Activated naive CD4-positive, alpha-beta T cell treated with anti-CD3 and anti-CD28 coated beads for 36 hours (primary cell): ENCODE measurements at regions of chr7 and their contacts with region 1.

Region 1: DNA sequence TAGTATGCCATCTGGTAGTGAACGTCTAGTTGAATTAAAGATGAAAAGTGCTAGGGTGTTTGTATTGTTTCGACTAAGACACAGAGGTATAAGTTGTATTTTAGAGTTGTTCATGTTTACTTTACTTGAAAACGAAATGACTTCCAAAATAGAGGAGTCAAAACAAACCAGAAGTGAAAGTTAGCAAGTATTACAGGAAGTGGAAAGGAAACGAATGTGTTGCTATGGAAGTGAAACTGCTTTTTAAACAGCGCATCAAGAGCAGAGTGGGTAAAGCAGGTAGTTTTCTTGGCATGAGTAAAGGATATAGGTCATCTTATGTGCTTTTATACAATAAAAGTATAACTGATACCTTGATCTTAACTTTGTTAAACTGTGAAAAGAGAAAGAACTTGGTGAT is 20.0 kb upstream of the GALNTL5 start:
- DNase-seq: no peak
- H3K4me3 Mint-ChIP-seq: peak overlapping the region; percentile 45
- H3K27ac Mint-ChIP-seq: peak overlapping the region; percentile 73
- H3K4me1 Mint-ChIP-seq: peaks cover 30% of the 10 kb centered on the region
- H3K27me3 Mint-ChIP-seq: no peaks in the 10 kb centered on the region

Region 2: GRCh38 chr7:151570366-151570915 is 365.8 kb before region 1 on chr7:
- CTCF ChIA-PET with region 1: no interaction called
- intact Hi-C with region 1: loop called (anchors 10 kb)
- DNase-seq: no peak
- H3K4me3 Mint-ChIP-seq: no peak overlapping the region
- H3K27ac Mint-ChIP-seq: no peak overlapping the region
- H3K4me1 Mint-ChIP-seq: no peaks in the 10 kb centered on the region
- H3K27me3 Mint-ChIP-seq: no peaks in the 10 kb centered on the region

Region 3: GRCh38 chr7:151769188-151769841 is 166.9 kb before region 1 on chr7:
- CTCF ChIA-PET with region 1: no interaction called
- intact Hi-C with region 1: loop called (anchors 1 kb)
- DNase-seq: peak; percentile 62
- H3K4me3 Mint-ChIP-seq: peak overlapping the region; percentile 10
- H3K27ac Mint-ChIP-seq: peak overlapping the region; percentile 86
- H3K4me1 Mint-ChIP-seq: peaks cover 51% of the 10 kb centered on the region
- H3K27me3 Mint-ChIP-seq: no peaks in the 10 kb centered on the region

Region 4: GRCh38 chr7:151863386-151864079 is 72.7 kb before region 1 on chr7:
- CTCF ChIA-PET with region 1: no interaction called
- intact Hi-C with region 1: loop called (anchors 1 kb)
- DNase-seq: peak; percentile 24
- H3K4me3 Mint-ChIP-seq: no peak overlapping the region
- H3K27ac Mint-ChIP-seq: no peak overlapping the region
- H3K4me1 Mint-ChIP-seq: peaks cover 6% of the 10 kb centered on the region
- H3K27me3 Mint-ChIP-seq: no peaks in the 10 kb centered on the region

Region 5: GRCh38 chr7:151925446-151926335 is 10.5 kb before region 1 on chr7:
- CTCF ChIA-PET with region 1: interaction called, 3 read pairs
- intact Hi-C with region 1: loop called (anchors 1 kb)
- DNase-seq: peak; percentile 60
- H3K4me3 Mint-ChIP-seq: no peak overlapping the region
- H3K27ac Mint-ChIP-seq: peak overlapping the region; percentile 51
- H3K4me1 Mint-ChIP-seq: peaks cover 10% of the 10 kb centered on the region
- H3K27me3 Mint-ChIP-seq: no peaks in the 10 kb centered on the region